GM12878 (cell line): ENCODE measurements at regions of chr6 and their contacts with region 1.

Region 1: GRCh38 chr6:110179401-110180227 is at the start of gene WASF1:
- DNase-seq: peak; percentile 76
- ATAC-seq: peak; percentile 92
- H3K4me3 ChIP-seq: peak within 1 kb of the TSS; percentile 83
- H3K27ac ChIP-seq: peak within 1 kb of the TSS; percentile 77
- H3K4me1 ChIP-seq: no peaks in the 10 kb centered on the region; the same call in 1 of the 2 replicates
- H3K27me3 ChIP-seq: no peaks in the 10 kb centered on the region
- CTCF ChIP-seq: no peak
- EP300 ChIP-seq: 0 out of 4 replicates have a peak, but pooled peaks of 1 of the 2 experiments have one; percentile 1
- POLR2A ChIP-seq: no peak
- RAD21 ChIP-seq: no peak
- polyA plus RNA-seq, gene WASF1: 1.7 to 3.5 TPM

Region 2: DNA sequence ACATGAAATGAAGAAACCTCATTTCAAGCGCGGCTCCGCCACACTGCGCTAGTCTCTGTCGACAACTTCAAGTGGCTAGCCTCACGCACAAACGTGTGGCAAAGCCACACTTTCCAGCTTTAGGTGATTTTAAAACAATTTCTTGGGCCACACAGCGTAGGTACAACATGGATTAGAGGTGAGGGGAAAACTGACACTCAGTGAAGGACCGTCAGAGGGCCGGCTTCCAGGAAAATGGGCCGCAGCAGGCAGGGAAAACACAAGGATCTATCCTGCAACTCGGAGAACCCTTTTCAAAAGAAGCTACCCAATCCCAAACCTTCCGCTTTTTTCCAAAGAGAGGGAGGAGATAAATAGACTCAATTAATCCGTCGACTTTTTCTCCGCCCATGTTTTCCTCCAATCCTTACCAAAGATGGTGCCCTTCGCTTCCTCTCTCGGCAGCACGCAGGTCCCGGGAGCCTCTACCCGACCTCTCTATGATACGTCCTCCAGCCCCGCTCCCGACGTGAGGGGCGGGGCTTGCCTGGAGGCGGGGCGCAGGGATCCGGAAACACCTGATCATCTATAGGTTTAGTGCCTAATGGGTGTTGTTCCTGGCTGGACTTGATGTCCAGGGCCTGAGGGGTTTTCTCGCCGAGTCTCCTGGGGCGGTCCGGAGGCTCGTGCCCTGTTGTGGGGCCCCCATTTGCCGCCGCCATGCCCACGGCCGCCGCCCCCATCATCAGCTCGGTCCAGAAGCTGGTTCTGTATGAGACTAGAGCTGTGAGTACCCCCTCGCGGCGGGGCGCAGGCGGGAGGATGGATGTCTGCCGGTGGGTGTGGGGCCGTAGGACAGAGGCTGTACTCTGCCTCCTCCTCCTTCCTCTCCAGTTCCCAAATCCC is 488.6 kb before region 1 on chr6 and contains the starts of genes AK9 and FIG4:
- CTCF ChIA-PET with region 1: no interaction called
- POLR2A ChIA-PET with region 1: no interaction called
- RAD21 ChIA-PET with region 1: no interaction called
- SMC1A ChIA-PET with region 1: no interaction called
- in situ Hi-C with region 1: no loop called
- intact Hi-C with region 1: loop called (anchors 10 kb)
- DNase-seq: peak; percentile 61
- ATAC-seq: peak; percentile 97
- H3K4me3 ChIP-seq: peak within 1 kb of the TSS; percentile 91
- H3K27ac ChIP-seq: peak within 1 kb of the TSS; percentile 67
- H3K4me1 ChIP-seq: peaks cover 5% of the 10 kb centered on the region
- H3K27me3 ChIP-seq: no peaks in the 10 kb centered on the region
- CTCF ChIP-seq: peak in 2 of 3 experiments; percentile 16 to 29; a peak in 3 of 6 replicates
- EP300 ChIP-seq: no peak
- POLR2A ChIP-seq: peak; percentile 67
- RAD21 ChIP-seq: peak; percentile 17; the same call in 1 of the 2 replicates
- polyA plus RNA-seq, gene AK9: 4.0 to 5.8 TPM
- polyA plus RNA-seq, gene FIG4: 3.8 to 4.7 TPM

Region 3: GRCh38 chr6:110207652-110208051 is 28.0 kb after region 1 on chr6:
- CTCF ChIA-PET with region 1: interaction called, 9 read pairs
- POLR2A ChIA-PET with region 1: interaction called, 6 read pairs
- RAD21 ChIA-PET with region 1: interaction called, 12 read pairs
- SMC1A ChIA-PET with region 1: interaction called, 13 read pairs
- in situ Hi-C with region 1: no loop called
- intact Hi-C with region 1: no loop called
- DNase-seq: no peak
- ATAC-seq: no peak
- H3K4me3 ChIP-seq: no peak overlapping the region
- H3K27ac ChIP-seq: no peak overlapping the region
- H3K4me1 ChIP-seq: peaks cover 9% of the 10 kb centered on the region
- H3K27me3 ChIP-seq: no peaks in the 10 kb centered on the region
- CTCF ChIP-seq: no peak
- EP300 ChIP-seq: no peak
- POLR2A ChIP-seq: no peak
- RAD21 ChIP-seq: no peak

Region 4: GRCh38 chr6:110389689-110390382 is 210.2 kb after region 1 on chr6:
- CTCF ChIA-PET with region 1: interaction called, 74 read pairs
- POLR2A ChIA-PET with region 1: no interaction called
- RAD21 ChIA-PET with region 1: interaction called, 15 read pairs
- SMC1A ChIA-PET with region 1: interaction called, 33 read pairs
- in situ Hi-C with region 1: loop called (anchors 10 kb)
- intact Hi-C with region 1: loop called (anchors 1 kb)
- DNase-seq: no peak
- ATAC-seq: no peak
- H3K4me3 ChIP-seq: no peak overlapping the region
- H3K27ac ChIP-seq: no peak overlapping the region
- H3K4me1 ChIP-seq: no peaks in the 10 kb centered on the region
- H3K27me3 ChIP-seq: no peaks in the 10 kb centered on the region
- CTCF ChIP-seq: no peak
- EP300 ChIP-seq: no peak
- POLR2A ChIP-seq: no peak
- RAD21 ChIP-seq: no peak